Calu3 (cell line): ENCODE measurements at regions of chr4 and their contacts with region 1.

Region 1: GRCh38 chr4:170259631-170260153 is 169.9 kb upstream of the AADAT start:
- DNase-seq: peak; percentile 80
- H3K4me3 Mint-ChIP-seq: no peak overlapping the region
- H3K27ac Mint-ChIP-seq: no peak overlapping the region
- H3K4me1 Mint-ChIP-seq: no peaks in the 10 kb centered on the region
- H3K27me3 Mint-ChIP-seq: no peaks in the 10 kb centered on the region
- CTCF ChIP-seq: peak; percentile 80

Region 2: GRCh38 chr4:170109586-170110284 is 150.0 kb before region 1 on chr4:
- CTCF ChIA-PET with region 1: no interaction called
- intact Hi-C with region 1: no loop called
- DNase-seq: no peak
- H3K4me3 Mint-ChIP-seq: no peak overlapping the region
- H3K27ac Mint-ChIP-seq: no peak overlapping the region
- H3K4me1 Mint-ChIP-seq: peaks cover 7% of the 10 kb centered on the region
- H3K27me3 Mint-ChIP-seq: no peaks in the 10 kb centered on the region
- CTCF ChIP-seq: no peak

Region 3: GRCh38 chr4:170138580-170139194 is 121.0 kb before region 1 on chr4:
- CTCF ChIA-PET with region 1: interaction called, 3 read pairs
- intact Hi-C with region 1: loop called (anchors 1 kb)
- DNase-seq: peak; percentile 72
- H3K4me3 Mint-ChIP-seq: no peak overlapping the region
- H3K27ac Mint-ChIP-seq: no peak overlapping the region
- H3K4me1 Mint-ChIP-seq: peaks cover 6% of the 10 kb centered on the region
- H3K27me3 Mint-ChIP-seq: no peaks in the 10 kb centered on the region
- CTCF ChIP-seq: peak; percentile 49

Region 4: GRCh38 chr4:170198747-170199146 is 60.9 kb before region 1 on chr4:
- CTCF ChIA-PET with region 1: interaction called, 5 read pairs
- intact Hi-C with region 1: loop called (anchors 1 kb)
- DNase-seq: no peak
- H3K4me3 Mint-ChIP-seq: no peak overlapping the region
- H3K27ac Mint-ChIP-seq: no peak overlapping the region
- H3K4me1 Mint-ChIP-seq: no peaks in the 10 kb centered on the region
- H3K27me3 Mint-ChIP-seq: no peaks in the 10 kb centered on the region
- CTCF ChIP-seq: no peak

Region 5: DNA sequence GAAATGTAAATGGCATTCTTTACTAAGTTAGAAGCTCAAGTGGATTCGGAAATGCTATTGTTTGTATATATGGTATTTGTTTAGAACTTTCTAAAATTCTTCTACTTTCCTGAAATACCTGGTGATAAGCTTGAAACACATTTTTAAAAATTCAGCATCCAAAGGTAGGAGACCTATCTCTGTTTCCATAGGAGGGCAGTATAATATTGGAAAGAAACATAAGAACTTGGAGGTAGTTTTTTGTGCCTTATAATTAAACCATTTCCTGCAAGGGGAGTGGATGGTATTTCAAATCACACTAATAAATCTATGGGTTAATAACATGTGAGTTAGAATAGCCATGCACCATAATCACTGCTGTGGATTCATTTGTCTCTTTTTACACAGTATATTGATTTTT is 47.5 kb after region 1 on chr4:
- CTCF ChIA-PET with region 1: interaction called, 10 read pairs
- intact Hi-C with region 1: no loop called
- DNase-seq: no peak
- H3K4me3 Mint-ChIP-seq: no peak overlapping the region
- H3K27ac Mint-ChIP-seq: peak overlapping the region; percentile 82
- H3K4me1 Mint-ChIP-seq: peaks cover 40% of the 10 kb centered on the region
- H3K27me3 Mint-ChIP-seq: no peaks in the 10 kb centered on the region
- CTCF ChIP-seq: no peak

Region 6: GRCh38 chr4:170374770-170375169 is 115.1 kb after region 1 on chr4:
- CTCF ChIA-PET with region 1: interaction called, 15 read pairs
- intact Hi-C with region 1: loop called (anchors 1 kb)
- DNase-seq: peak; percentile 41
- H3K4me3 Mint-ChIP-seq: no peak overlapping the region
- H3K27ac Mint-ChIP-seq: no peak overlapping the region
- H3K4me1 Mint-ChIP-seq: no peaks in the 10 kb centered on the region
- H3K27me3 Mint-ChIP-seq: no peaks in the 10 kb centered on the region
- CTCF ChIP-seq: peak; percentile 43

Region 7: GRCh38 chr4:170391066-170391740 is 131.5 kb after region 1 on chr4:
- CTCF ChIA-PET with region 1: no interaction called
- intact Hi-C with region 1: no loop called
- DNase-seq: no peak
- H3K4me3 Mint-ChIP-seq: no peak overlapping the region
- H3K27ac Mint-ChIP-seq: no peak overlapping the region
- H3K4me1 Mint-ChIP-seq: no peaks in the 10 kb centered on the region
- H3K27me3 Mint-ChIP-seq: no peaks in the 10 kb centered on the region
- CTCF ChIP-seq: no peak

Region 8: DNA sequence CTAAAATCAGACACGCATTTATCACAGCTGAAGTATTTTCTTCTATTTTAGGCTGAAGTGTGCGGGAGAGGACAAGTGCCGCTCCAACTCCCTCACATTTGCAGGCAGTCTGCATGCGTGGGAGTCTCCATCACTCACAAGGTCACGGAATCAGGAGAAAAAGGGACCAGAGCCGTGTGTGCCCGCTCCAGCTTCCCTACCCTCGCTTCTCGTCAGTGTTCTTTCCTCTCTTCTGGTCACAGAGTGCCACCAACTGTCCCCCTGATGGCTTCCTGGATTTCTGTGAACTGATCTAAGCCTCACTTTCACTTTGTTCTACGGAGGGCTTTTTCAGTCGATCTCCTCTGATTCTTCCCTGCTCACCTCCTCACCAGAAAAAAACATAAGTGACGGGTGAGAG is 237.4 kb after region 1 on chr4:
- CTCF ChIA-PET with region 1: interaction called, 9 read pairs
- intact Hi-C with region 1: loop called (anchors 2 kb)
- DNase-seq: peak; percentile 38
- H3K4me3 Mint-ChIP-seq: peak overlapping the region; percentile 76
- H3K27ac Mint-ChIP-seq: peak overlapping the region; percentile 67
- H3K4me1 Mint-ChIP-seq: no peaks in the 10 kb centered on the region
- H3K27me3 Mint-ChIP-seq: no peaks in the 10 kb centered on the region
- CTCF ChIP-seq: no peak

Region 9: GRCh38 chr4:170853422-170854021 is 593.8 kb after region 1 on chr4:
- CTCF ChIA-PET with region 1: no interaction called
- intact Hi-C with region 1: loop called (anchors 5 kb)
- DNase-seq: peak; percentile 67
- H3K4me3 Mint-ChIP-seq: no peak overlapping the region
- H3K27ac Mint-ChIP-seq: no peak overlapping the region
- H3K4me1 Mint-ChIP-seq: no peaks in the 10 kb centered on the region
- H3K27me3 Mint-ChIP-seq: no peaks in the 10 kb centered on the region
- CTCF ChIP-seq: peak; percentile 50